ENCODE measurements at regions of chr9 and their contacts with region 1.

Region 1: GRCh38 chr9:25703701-25704357 is 25.6 kb upstream of the TUSC1 start:
- DNase-seq: no peak
- H3K4me3 Mint-ChIP-seq: no peak overlapping the region
- H3K27ac Mint-ChIP-seq: no peak overlapping the region
- H3K4me1 Mint-ChIP-seq: no peaks in the 10 kb centered on the region
- H3K27me3 Mint-ChIP-seq: no peaks in the 10 kb centered on the region

Region 2: DNA sequence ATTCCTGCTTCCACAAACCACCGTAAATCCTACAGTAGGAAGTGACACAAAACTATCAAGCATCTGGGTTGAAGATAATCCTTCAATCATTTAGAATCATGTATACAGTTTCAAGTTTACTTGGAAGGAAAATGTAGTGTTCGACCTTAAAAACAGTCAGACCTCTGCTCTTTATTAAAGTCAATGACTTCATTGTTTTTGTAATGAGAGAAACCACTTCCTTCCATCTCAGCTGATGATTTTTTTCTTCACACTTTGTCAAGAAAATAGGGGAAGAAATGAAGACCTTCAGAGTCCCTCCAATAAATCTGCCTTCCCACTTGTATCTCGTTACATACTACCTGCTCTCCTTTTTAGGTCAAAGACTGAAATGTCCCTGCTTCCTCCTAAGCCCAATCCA is 55.7 kb before region 1 on chr9:
- CTCF ChIA-PET with region 1: no interaction called
- POLR2A ChIA-PET with region 1: no interaction called
- intact Hi-C with region 1: loop called (anchors 10 kb)
- DNase-seq: no peak
- H3K4me3 Mint-ChIP-seq: no peak overlapping the region
- H3K27ac Mint-ChIP-seq: no peak overlapping the region
- H3K4me1 Mint-ChIP-seq: no peaks in the 10 kb centered on the region
- H3K27me3 Mint-ChIP-seq: no peaks in the 10 kb centered on the region